ENCODE measurements at regions of chr3 and their contacts with region 1.

Region 1: GRCh38 chr3:9379327-9379726 is 16.5 kb downstream of the THUMPD3 start:
- DNase-seq: no peak
- H3K4me3 ChIP-seq: no peak overlapping the region
- H3K4me3 Mint-ChIP-seq: no peak overlapping the region
- H3K27ac ChIP-seq: no peak overlapping the region
- H3K27ac Mint-ChIP-seq: peak overlapping the region in 1 of 7 donors; percentile 19
- H3K4me1 ChIP-seq: no peaks in the 10 kb centered on the region
- H3K4me1 Mint-ChIP-seq: no peaks in the 10 kb centered on the region
- H3K27me3 ChIP-seq: no peaks in the 10 kb centered on the region
- H3K27me3 Mint-ChIP-seq: no peaks in the 10 kb centered on the region
- CTCF ChIP-seq: no peak

Region 2: DNA sequence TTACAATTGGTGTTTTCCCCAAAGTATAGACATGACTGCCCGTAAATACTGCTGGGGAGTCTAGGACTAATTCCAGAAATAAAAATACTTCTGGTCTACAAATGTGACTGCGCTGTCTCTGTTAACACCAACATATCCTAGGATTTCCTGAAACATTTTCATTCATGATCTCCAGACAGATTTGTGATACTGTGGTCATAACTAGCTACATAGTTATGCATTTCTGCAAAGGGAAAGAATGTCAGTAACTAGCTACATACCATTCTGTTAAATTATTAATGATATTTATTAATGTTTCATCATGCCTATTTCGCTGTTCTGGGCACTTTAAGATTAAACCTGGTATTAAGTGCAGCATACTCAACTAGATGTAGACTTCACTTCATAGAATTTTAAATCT is 51.4 kb after region 1 on chr3:
- intact Hi-C with region 1: loop called in 1 of 2 experiments (anchors 5 kb)
- DNase-seq: no peak
- H3K4me3 ChIP-seq: no peak overlapping the region
- H3K4me3 Mint-ChIP-seq: no peak overlapping the region
- H3K27ac ChIP-seq: no peak overlapping the region
- H3K27ac Mint-ChIP-seq: no peak overlapping the region
- H3K4me1 ChIP-seq: no peaks in the 10 kb centered on the region
- H3K4me1 Mint-ChIP-seq: no peaks in the 10 kb centered on the region
- H3K27me3 ChIP-seq: no peaks in the 10 kb centered on the region
- H3K27me3 Mint-ChIP-seq: no peaks in the 10 kb centered on the region
- CTCF ChIP-seq: no peak

Measured in CD14-positive monocyte (primary cell).